ENCODE measurements at regions of chr2 and their contacts with region 1.

Region 1: GRCh38 chr2:43131024-43131889 is 95.1 kb downstream of the ZFP36L2 start:
- DNase-seq: peak; percentile 85
- H3K4me3 ChIP-seq: no peak overlapping the region
- H3K27ac ChIP-seq: peak overlapping the region; percentile 63
- H3K4me1 ChIP-seq: peaks cover 36% of the 10 kb centered on the region
- H3K27me3 ChIP-seq: no peaks in the 10 kb centered on the region
- CTCF ChIP-seq: peak; percentile 33

Region 2: GRCh38 chr2:42974721-42975717 is 156.2 kb before region 1 on chr2:
- intact Hi-C with region 1: loop called (anchors 5 kb)
- DNase-seq: peak; percentile 86
- H3K4me3 ChIP-seq: peak overlapping the region; percentile 19
- H3K27ac ChIP-seq: peak overlapping the region; percentile 30
- H3K4me1 ChIP-seq: peaks cover 6% of the 10 kb centered on the region
- H3K27me3 ChIP-seq: no peaks in the 10 kb centered on the region
- CTCF ChIP-seq: peak; percentile 86

Region 3: DNA sequence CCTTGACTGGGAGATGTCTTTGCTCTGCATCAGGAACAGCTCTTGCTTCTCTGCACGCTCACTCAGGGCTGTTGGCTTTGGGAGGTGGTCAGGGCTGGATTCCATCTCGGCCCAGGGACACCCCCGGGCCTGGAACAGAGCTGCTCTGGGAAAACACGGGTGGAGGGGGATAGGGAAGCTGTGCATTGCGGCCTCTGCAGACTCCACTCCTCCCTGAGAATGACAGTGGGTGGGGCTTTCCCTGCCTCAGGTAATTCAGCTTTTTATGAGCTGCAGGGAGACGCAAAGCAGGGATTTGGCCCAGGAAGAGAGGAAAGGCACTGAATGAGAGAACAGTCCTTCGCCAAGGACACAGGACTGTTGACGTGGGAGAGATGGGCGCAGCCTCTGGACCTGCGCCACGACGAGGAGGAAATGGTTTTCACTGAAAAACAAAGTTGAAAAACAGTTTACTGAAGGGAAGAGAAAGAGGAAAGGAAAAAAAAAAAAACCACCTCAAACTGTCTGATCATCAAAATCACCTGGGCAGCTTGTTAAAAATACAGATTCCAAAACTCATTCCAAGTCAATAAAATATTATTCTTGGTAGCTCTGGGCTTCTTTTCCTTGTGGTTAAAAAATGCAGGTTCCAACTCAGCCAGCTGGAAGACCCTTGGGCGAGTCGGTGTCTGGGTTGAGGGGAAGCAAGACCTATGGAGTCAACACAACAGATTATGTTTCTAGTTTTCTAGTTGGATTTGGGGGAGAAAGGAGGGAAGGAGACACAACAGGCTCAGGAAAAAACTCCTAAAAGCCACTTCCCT is 98.8 kb before region 1 on chr2:
- intact Hi-C with region 1: loop called (anchors 10 kb)
- DNase-seq: peak; percentile 91
- H3K4me3 ChIP-seq: no peak overlapping the region
- H3K27ac ChIP-seq: peak overlapping the region; percentile 75
- H3K4me1 ChIP-seq: peaks cover 7% of the 10 kb centered on the region
- H3K27me3 ChIP-seq: no peaks in the 10 kb centered on the region
- CTCF ChIP-seq: no peak